Activated CD8-positive, alpha-beta T cell treated with anti-CD3 and anti-CD28 coated beads for 36 hours (primary cell): ENCODE measurements at regions of chr9 and their contacts with region 1.

Region 1: DNA sequence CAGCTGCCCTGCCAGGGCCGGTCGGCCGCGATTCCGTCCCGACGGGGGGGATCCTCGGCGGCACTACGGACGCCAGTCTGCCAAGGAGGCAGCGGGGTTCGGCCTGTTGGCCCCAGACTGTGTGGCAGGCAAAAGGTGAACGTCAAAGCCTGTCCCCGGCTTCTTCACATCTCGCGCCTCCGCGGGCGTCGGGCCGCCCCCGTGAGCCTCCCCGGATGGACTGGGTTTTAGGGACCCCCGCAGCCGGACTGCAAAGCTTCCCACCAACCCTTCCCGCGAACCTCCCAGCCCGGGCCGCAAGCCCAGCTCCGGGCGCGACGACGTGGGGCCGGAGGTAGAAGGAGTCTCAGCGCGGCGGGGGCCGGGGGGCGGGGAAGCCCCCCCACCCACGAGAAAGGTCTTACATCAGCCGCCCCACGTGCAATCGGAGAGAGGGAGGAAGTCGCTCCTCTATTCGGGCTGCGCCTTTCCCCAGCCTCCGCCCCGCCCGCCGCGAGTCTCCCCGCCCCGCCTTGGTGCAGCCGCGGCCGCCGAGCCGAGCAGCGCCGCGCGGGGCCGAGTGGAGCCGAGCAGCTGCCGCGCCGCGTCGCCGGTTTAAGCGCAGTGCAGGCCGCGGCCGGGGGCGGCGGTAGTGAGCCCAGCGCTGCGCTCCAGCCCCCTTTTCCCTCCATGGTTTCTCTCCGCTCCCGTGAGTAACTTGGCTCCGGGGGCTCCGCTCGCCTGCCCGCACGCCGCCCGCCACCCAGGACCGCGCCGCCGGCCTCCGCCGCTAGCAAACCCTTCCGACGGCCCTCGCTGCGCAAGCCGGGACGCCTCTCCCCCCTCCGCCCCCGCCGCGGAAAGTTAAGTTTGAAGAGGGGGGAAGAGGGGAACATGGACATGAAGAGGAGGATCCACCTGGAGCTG is at the start of gene ANP32B:
- DNase-seq: peak; percentile 96
- ATAC-seq: peak; percentile 88
- H3K4me3 Mint-ChIP-seq: peak within 1 kb of the TSS; percentile 83
- H3K27ac Mint-ChIP-seq: peak within 1 kb of the TSS; percentile 93
- H3K4me1 Mint-ChIP-seq: peaks cover 53% of the 10 kb centered on the region
- H3K27me3 Mint-ChIP-seq: no peaks in the 10 kb centered on the region
- CTCF ChIP-seq: peak; percentile 92
- total RNA-seq, gene ANP32B: 374 to 389 TPM

Region 2: DNA sequence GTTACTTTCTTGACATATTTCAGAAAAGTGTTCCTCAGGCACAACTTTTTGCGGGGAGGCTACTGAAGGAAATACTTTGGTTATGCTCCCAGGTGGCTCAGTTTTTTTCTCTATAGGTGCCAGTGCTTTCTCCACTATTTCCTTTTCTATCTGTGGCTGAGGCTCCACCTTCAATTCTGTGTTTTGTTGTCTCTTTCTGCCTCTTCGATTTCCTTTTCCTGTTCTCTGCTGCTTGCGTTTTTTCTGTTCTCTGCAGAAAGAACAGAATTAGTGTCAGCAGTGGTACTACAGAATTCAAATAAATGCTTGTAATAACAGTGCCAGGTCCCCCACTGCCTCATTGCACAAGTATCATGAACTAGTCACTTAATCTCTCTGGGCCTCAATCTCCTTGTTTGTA is 52.0 kb before region 1 on chr9:
- CTCF ChIA-PET with region 1: no interaction called
- POLR2A ChIA-PET with region 1: interaction called, 40 read pairs
- intact Hi-C with region 1: no loop called
- DNase-seq: no peak
- ATAC-seq: no peak
- H3K4me3 Mint-ChIP-seq: peak overlapping the region; percentile 48
- H3K27ac Mint-ChIP-seq: peak overlapping the region; percentile 90
- H3K4me1 Mint-ChIP-seq: peaks cover 40% of the 10 kb centered on the region
- H3K27me3 Mint-ChIP-seq: no peaks in the 10 kb centered on the region
- CTCF ChIP-seq: no peak

Region 3: DNA sequence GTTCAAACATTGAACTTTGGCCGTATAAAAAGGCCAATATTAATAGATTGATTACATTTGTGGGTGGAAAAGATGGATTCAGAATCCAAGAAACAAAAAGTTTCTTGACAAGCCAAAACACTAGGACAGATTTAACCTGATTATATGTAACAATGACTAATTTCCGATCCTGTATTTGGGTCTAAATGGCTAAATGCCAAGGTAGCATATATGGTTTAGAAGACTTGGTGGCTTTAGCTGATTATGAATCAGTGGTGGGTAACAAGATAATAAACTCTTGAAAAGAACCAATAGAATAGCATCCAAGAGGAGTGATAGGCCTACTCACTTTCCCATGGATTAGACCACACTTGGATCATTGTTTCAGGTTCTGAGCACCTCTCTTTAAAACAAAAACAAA is 21.6 kb before region 1 on chr9:
- CTCF ChIA-PET with region 1: interaction called, 7 read pairs
- POLR2A ChIA-PET with region 1: interaction called, 40 read pairs
- intact Hi-C with region 1: no loop called
- DNase-seq: no peak
- ATAC-seq: no peak
- H3K4me3 Mint-ChIP-seq: no peak overlapping the region
- H3K27ac Mint-ChIP-seq: no peak overlapping the region
- H3K4me1 Mint-ChIP-seq: peaks cover 4% of the 10 kb centered on the region
- H3K27me3 Mint-ChIP-seq: peaks cover 1% of the 10 kb centered on the region
- CTCF ChIP-seq: no peak

Region 4: GRCh38 chr9:97993000-97993399 is 10.1 kb after region 1 on chr9:
- CTCF ChIA-PET with region 1: interaction called, 5 read pairs
- POLR2A ChIA-PET with region 1: interaction called, 76 read pairs
- intact Hi-C with region 1: no loop called
- DNase-seq: no peak
- ATAC-seq: peak; percentile 66
- H3K4me3 Mint-ChIP-seq: peak overlapping the region; percentile 11
- H3K27ac Mint-ChIP-seq: peak overlapping the region; percentile 80
- H3K4me1 Mint-ChIP-seq: peaks cover 84% of the 10 kb centered on the region
- H3K27me3 Mint-ChIP-seq: no peaks in the 10 kb centered on the region
- CTCF ChIP-seq: no peak

Region 5: GRCh38 chr9:98045234-98046179 is 62.6 kb after region 1 on chr9:
- CTCF ChIA-PET with region 1: interaction called, 4 read pairs
- POLR2A ChIA-PET with region 1: interaction called, 28 read pairs
- intact Hi-C with region 1: no loop called
- DNase-seq: peak; percentile 52
- ATAC-seq: peak; percentile 93
- H3K4me3 Mint-ChIP-seq: peak overlapping the region; percentile 86
- H3K27ac Mint-ChIP-seq: peak overlapping the region; percentile 94
- H3K4me1 Mint-ChIP-seq: peaks cover 36% of the 10 kb centered on the region
- H3K27me3 Mint-ChIP-seq: no peaks in the 10 kb centered on the region
- CTCF ChIP-seq: peak; percentile 35

Region 6: GRCh38 chr9:98430535-98431292 is 447.8 kb after region 1 on chr9:
- CTCF ChIA-PET with region 1: no interaction called
- POLR2A ChIA-PET with region 1: no interaction called
- intact Hi-C with region 1: no loop called
- DNase-seq: no peak
- ATAC-seq: no peak
- H3K4me3 Mint-ChIP-seq: no peak overlapping the region
- H3K27ac Mint-ChIP-seq: no peak overlapping the region
- H3K4me1 Mint-ChIP-seq: no peaks in the 10 kb centered on the region
- H3K27me3 Mint-ChIP-seq: no peaks in the 10 kb centered on the region
- CTCF ChIP-seq: no peak